A549 (cell line): ENCODE measurements at regions of chr22 and their contacts with region 1.

Region 1: GRCh38 chr22:37608477-37609239 is at the start of gene GGA1:
- DNase-seq: peak; percentile 91 to 96
- ATAC-seq: peak; percentile 86 to 88
- H3K4me3 ChIP-seq: peak within 1 kb of the TSS; percentile 76
- H3K27ac ChIP-seq: peak within 1 kb of the TSS; percentile 91 to 97
- H3K4me1 ChIP-seq: peaks cover 9% of the 10 kb centered on the region; the same call in 2 of the 3 replicates
- CTCF ChIP-seq: no peak
- EP300 ChIP-seq: no peak
- POLR2A ChIP-seq: peak; percentile 8
- RAD21 ChIP-seq: no peak
- polyA plus RNA-seq, gene GGA1: 20.5 and 22.0 TPM in 2 replicates

Region 2: DNA sequence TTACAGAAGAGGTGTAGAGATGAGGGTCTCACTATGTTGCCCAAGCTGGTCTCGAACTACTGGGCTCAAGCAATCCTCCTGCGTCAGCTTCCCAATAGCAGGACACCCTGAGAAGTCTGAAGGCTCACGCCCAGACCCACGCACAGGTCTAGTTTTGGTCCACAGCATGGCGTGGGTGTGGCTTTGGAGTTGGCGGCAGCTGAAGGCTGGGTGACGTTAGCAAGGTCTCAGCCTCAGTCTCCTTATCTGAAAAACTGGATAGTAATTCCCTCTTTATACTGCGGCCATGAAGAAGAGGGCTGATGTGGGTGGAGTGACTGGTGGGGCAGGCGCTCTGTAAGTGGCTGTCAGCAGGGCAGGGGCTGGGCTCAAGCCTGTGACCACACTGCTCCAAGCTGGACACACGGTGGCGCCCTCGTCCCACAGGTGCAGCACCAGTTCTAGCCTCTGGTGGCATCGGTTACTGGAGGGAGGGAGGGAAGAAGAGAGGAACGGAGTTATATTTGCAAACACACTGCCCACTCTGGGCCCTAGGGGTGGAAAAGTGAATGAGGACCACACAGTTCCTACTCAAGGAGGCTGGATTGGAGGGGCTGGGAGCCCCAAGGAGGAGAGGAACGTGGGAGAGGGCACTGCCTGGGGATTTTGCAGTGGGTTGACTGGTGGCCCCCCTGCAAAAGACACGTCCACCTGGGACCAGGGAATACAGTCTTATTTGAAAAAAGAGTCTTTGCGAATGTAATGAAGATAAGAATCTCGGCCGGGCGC is 69.9 kb before region 1 on chr22:
- CTCF ChIA-PET with region 1: interaction called, 39 read pairs
- POLR2A ChIA-PET with region 1: interaction called, 9 read pairs
- DNase-seq: peak; percentile 88 to 91
- ATAC-seq: peak; percentile 99 to 100
- H3K4me3 ChIP-seq: no peak overlapping the region
- H3K27ac ChIP-seq: peak overlapping the region; percentile 54 to 75; a peak in 5 of 6 replicates
- H3K4me1 ChIP-seq: peaks cover 24% of the 10 kb centered on the region
- CTCF ChIP-seq: peak; percentile 85
- EP300 ChIP-seq: no peak
- POLR2A ChIP-seq: no peak
- RAD21 ChIP-seq: peak; percentile 96 to 97

Region 3: GRCh38 chr22:37561212-37562048 is 47.2 kb before region 1 on chr22:
- CTCF ChIA-PET with region 1: interaction called, 11 read pairs
- POLR2A ChIA-PET with region 1: no interaction called
- DNase-seq: peak; percentile 74 to 85
- ATAC-seq: peak; percentile 57 to 71
- H3K4me3 ChIP-seq: peak overlapping the region; percentile 98
- H3K27ac ChIP-seq: peak overlapping the region; percentile 100
- H3K4me1 ChIP-seq: peaks cover 58% of the 10 kb centered on the region
- CTCF ChIP-seq: peak; percentile 62
- EP300 ChIP-seq: no peak
- POLR2A ChIP-seq: no peak
- RAD21 ChIP-seq: peak; percentile 32 to 44; a peak in 3 of 5 replicates

Region 4: GRCh38 chr22:37566903-37567820 is 41.5 kb before region 1 on chr22:
- CTCF ChIA-PET with region 1: interaction called, 11 read pairs
- POLR2A ChIA-PET with region 1: no interaction called
- DNase-seq: peak; percentile 63 to 68
- ATAC-seq: peak; percentile 38 to 71; a peak in 5 of 6 replicates
- H3K4me3 ChIP-seq: no peak overlapping the region
- H3K27ac ChIP-seq: 0 out of 6 replicates have a peak overlapping the region, but pooled peaks of 1 of the 2 experiments have one; percentile 11
- H3K4me1 ChIP-seq: peaks cover 63% of the 10 kb centered on the region
- CTCF ChIP-seq: peak; percentile 74
- EP300 ChIP-seq: no peak
- POLR2A ChIP-seq: no peak
- RAD21 ChIP-seq: peak; percentile 83

Region 5: DNA sequence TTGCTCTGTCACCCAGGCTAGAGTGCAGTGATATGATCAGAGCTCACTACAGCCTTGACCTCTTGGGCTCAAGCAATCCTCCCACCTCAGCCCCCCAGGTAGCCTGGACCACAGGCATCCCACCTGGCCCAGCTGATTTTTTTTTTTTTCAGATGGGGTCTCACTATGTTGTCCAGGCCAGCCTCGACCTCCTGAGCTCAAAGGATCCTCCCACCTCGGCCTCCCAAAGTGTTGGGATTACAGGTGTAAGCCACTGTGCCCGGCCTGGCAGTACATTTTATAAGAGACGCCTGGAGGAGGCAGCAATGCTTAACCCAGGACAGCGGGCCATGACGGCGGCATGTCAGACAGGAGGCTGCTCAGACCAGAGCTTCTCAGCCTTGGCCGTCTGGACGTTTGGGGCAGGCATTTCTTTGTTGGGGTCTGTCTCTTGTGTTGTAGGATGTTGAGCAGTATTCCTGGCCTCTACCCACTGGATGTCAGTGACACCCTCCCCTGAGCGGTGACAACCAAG is 33.1 kb before region 1 on chr22:
- CTCF ChIA-PET with region 1: interaction called, 12 read pairs
- POLR2A ChIA-PET with region 1: interaction called, 3 read pairs
- DNase-seq: no peak
- ATAC-seq: no peak
- H3K4me3 ChIP-seq: no peak overlapping the region
- H3K27ac ChIP-seq: no peak overlapping the region
- H3K4me1 ChIP-seq: peaks cover 13% of the 10 kb centered on the region
- CTCF ChIP-seq: no peak
- EP300 ChIP-seq: no peak
- POLR2A ChIP-seq: no peak
- RAD21 ChIP-seq: no peak

Region 6: DNA sequence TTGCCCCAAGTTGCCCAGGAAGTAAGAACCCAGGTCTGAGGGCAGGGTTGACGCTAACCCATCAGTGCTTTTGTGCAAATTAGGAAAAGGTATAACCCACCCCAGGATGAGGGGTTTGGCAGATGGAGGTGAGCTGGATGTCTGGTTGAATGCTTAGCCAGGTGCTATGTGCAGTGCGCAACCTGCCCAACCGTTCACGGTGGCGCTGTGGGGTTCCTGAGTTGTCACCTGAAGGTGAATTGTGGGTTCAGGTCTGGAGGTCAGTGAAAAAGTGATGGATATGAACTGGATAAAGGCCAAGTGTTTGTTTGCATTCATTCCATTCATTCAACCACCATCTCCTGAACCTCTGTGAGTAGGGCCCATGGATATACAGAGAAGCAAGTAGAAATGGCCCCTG is 14.4 kb before region 1 on chr22:
- CTCF ChIA-PET with region 1: interaction called, 32 read pairs
- POLR2A ChIA-PET with region 1: interaction called, 23 read pairs
- DNase-seq: no peak
- ATAC-seq: no peak
- H3K4me3 ChIP-seq: no peak overlapping the region
- H3K27ac ChIP-seq: no peak overlapping the region
- H3K4me1 ChIP-seq: peaks cover 10% of the 10 kb centered on the region
- CTCF ChIP-seq: no peak
- EP300 ChIP-seq: no peak
- POLR2A ChIP-seq: no peak
- RAD21 ChIP-seq: no peak

Region 7: GRCh38 chr22:37623075-37624016 is 14.7 kb after region 1 on chr22:
- CTCF ChIA-PET with region 1: interaction called, 27 read pairs
- POLR2A ChIA-PET with region 1: no interaction called
- DNase-seq: peak; percentile 32 to 57
- ATAC-seq: peak; percentile 77 to 89
- H3K4me3 ChIP-seq: no peak overlapping the region
- H3K27ac ChIP-seq: no peak overlapping the region
- H3K4me1 ChIP-seq: no peaks in the 10 kb centered on the region
- CTCF ChIP-seq: peak; percentile 70
- EP300 ChIP-seq: no peak
- POLR2A ChIP-seq: no peak
- RAD21 ChIP-seq: peak; percentile 45 to 58